Transverse colon (tissue), 4 donors: ENCODE measurements at regions of chr12 and their contacts with region 1.

Region 1: GRCh38 chr12:74689071-74689655 is 151.5 kb downstream of the ATXN7L3B start:
- DNase-seq: no peak
- H3K4me3 ChIP-seq: no peak overlapping the region
- H3K27ac ChIP-seq: no peak overlapping the region
- H3K4me1 ChIP-seq: no peaks in the 10 kb centered on the region
- H3K27me3 ChIP-seq: no peaks in the 10 kb centered on the region
- CTCF ChIP-seq: peak in 4 of 5 experiments; percentile 33 to 43 (median 40)
- EP300 ChIP-seq: no peak
- POLR2A ChIP-seq: no peak

Region 2: GRCh38 chr12:74752215-74752614 is 63.1 kb after region 1 on chr12:
- in situ Hi-C with region 1: loop called in 1 of 4 experiments (anchors 10 kb)
- intact Hi-C with region 1: no loop called
- DNase-seq: no peak
- H3K4me3 ChIP-seq: no peak overlapping the region
- H3K27ac ChIP-seq: no peak overlapping the region
- H3K4me1 ChIP-seq: no peaks in the 10 kb centered on the region
- H3K27me3 ChIP-seq: no peaks in the 10 kb centered on the region
- CTCF ChIP-seq: no peak
- EP300 ChIP-seq: no peak
- POLR2A ChIP-seq: no peak

Region 3: DNA sequence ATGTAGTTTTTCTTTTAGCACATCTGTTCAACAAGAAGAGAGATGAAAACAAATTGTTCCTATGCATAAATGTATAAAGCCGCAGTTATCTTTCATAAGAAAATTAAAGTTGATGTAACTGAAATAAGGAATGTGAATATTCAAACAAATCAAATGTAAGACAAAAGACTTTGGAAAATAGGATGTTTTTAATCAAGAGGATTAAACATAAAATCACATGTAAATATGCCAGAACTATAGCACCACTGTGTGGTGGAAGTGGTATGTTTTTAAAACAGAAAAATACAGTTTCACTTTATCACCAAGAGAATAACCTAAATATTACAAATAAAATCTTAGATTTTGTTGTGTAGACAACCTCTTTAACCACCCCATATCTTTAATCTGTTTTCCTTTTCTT is 600.6 kb after region 1 on chr12:
- in situ Hi-C with region 1: loop called in 1 of 4 experiments (anchors 25 kb)
- intact Hi-C with region 1: loop called (anchors 10 kb)
- DNase-seq: no peak
- H3K4me3 ChIP-seq: no peak overlapping the region
- H3K27ac ChIP-seq: no peak overlapping the region
- H3K4me1 ChIP-seq: no peaks in the 10 kb centered on the region
- H3K27me3 ChIP-seq: no peaks in the 10 kb centered on the region
- CTCF ChIP-seq: peak in 1 of 5 experiments; percentile 13
- EP300 ChIP-seq: no peak
- POLR2A ChIP-seq: no peak